ENCODE measurements at regions of chr10 and their contacts with region 1.

Region 1: GRCh38 chr10:70272925-70273316 is 10.9 kb downstream of the NPFFR1 start:
- H3K4me3 Mint-ChIP-seq: no peak overlapping the region
- H3K27ac Mint-ChIP-seq: no peak overlapping the region
- H3K4me1 Mint-ChIP-seq: peaks cover 40% of the 10 kb centered on the region
- H3K27me3 Mint-ChIP-seq: peaks cover 49% of the 10 kb centered on the region

Region 2: DNA sequence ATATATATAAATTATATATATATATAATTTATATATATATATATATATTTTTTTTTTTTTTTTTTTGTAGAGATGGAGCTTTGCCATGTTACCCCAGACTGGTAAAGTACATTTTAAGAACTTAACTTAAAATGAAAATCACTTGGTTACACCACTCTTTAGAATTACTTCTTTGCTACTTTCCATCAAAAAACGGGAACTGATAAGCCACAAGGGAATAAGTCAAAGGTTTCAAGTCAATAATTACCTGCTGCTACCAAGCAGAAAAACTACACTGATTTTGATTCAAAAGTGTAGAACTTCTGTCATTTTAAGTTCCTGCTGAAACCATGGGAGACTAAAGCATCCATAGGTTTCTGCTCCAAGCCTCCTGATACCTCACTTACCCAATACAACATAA is 51.9 kb before region 1 on chr10:
- intact Hi-C with region 1: loop called (anchors 5 kb)
- H3K4me3 Mint-ChIP-seq: no peak overlapping the region
- H3K27ac Mint-ChIP-seq: no peak overlapping the region
- H3K4me1 Mint-ChIP-seq: peaks cover 8% of the 10 kb centered on the region
- H3K27me3 Mint-ChIP-seq: no peaks in the 10 kb centered on the region

Region 3: DNA sequence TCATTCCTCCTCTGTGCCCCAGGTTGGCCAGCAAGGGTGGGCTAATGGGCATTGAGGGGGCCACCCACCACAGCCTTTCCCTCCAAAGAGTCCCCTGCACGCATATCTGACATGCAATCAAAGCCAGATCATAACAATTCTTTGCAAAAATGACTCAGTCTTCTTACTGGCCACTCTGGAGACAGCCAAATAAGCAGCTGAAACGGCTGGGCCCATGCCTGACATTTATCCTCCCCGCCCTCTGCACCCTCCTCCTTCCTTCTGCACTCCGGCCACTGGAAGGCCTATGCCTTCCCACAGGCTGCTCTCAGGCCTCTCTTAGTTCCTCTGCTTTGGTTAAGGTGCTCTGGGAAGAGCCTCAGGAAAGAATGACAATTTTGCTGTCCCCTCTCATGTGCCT is 40.1 kb after region 1 on chr10:
- intact Hi-C with region 1: no loop called
- H3K4me3 Mint-ChIP-seq: no peak overlapping the region
- H3K27ac Mint-ChIP-seq: no peak overlapping the region
- H3K4me1 Mint-ChIP-seq: peaks cover 30% of the 10 kb centered on the region
- H3K27me3 Mint-ChIP-seq: peaks cover 86% of the 10 kb centered on the region

Measured in dendritic cell treated with granulocyte-macrophage colony-stimulating factor and Interleukin-4, amounts not matched to agents 40 ng/mL and 50 ng/mL, for 4 days (primary cell).